Caco-2 (cell line): ENCODE measurements at regions of chr20 and their contacts with region 1.

Region 1: DNA sequence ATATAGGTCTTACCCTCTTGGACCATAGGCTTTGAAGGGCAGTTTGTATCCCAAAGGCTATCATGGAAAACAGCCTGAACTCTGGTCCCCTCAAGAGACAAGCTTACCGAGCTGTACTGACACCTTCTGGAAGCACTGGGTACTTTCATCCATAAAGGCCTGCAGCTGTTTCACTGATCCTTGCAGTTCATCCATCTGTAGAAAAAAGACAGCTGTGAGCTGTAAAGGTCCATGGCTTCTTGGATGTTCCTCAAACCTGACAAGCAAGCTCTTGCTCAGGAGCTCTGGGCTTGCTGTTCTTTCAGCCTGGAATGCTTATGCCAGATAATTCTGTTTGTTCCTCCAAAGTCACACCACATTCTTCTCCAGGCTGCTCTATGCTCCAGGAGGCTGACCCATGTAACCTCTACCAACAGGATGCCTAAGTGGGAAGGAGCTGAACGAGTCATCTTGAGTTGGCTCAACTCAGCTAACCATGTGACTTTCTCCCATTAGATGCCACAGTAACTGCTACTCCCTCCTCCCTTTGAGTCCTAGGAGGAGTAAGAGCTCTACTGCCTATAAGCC is 8.8 kb upstream of the NDRG3 start:
- DNase-seq: peak; percentile 86 to 89
- H3K4me3 ChIP-seq: no peak overlapping the region
- H3K4me3 Mint-ChIP-seq: no peak overlapping the region
- H3K27ac Mint-ChIP-seq: peak overlapping the region; percentile 10
- H3K4me1 ChIP-seq: peaks cover 5% of the 10 kb centered on the region
- H3K4me1 Mint-ChIP-seq: peaks cover 12% of the 10 kb centered on the region
- H3K27me3 ChIP-seq: no peaks in the 10 kb centered on the region
- H3K27me3 Mint-ChIP-seq: no peaks in the 10 kb centered on the region
- CTCF ChIP-seq: peak; percentile 96 to 97

Region 2: GRCh38 chr20:36550797-36551299 is 203.9 kb before region 1 on chr20:
- CTCF ChIA-PET with region 1: no interaction called
- POLR2A ChIA-PET with region 1: no interaction called
- intact Hi-C with region 1: loop called (anchors 1 kb)
- DNase-seq: no peak
- H3K4me3 ChIP-seq: no peak overlapping the region
- H3K4me3 Mint-ChIP-seq: no peak overlapping the region
- H3K27ac Mint-ChIP-seq: no peak overlapping the region
- H3K4me1 ChIP-seq: no peaks in the 10 kb centered on the region
- H3K4me1 Mint-ChIP-seq: no peaks in the 10 kb centered on the region
- H3K27me3 ChIP-seq: no peaks in the 10 kb centered on the region
- H3K27me3 Mint-ChIP-seq: peaks cover 2% of the 10 kb centered on the region
- CTCF ChIP-seq: no peak

Region 3: DNA sequence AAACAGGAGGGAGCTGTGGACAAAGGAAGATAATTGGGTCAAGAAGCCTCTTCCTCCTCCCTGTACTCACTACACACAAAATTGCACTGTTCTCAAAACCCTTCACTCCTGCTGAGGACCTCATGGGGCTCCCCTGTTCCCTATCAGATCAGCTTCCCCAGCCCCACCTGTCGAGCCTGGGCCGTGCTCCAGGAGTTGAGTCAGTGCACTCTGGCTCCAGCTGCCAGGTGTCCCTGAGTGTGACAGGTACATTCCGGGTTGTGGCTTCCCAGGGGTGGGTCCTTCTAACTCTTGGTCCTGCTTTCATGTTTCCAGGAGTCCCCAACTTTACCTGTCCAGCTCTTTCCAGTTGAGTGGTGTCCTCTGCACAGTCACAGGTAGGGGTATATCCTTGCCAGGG is 140.8 kb before region 1 on chr20:
- CTCF ChIA-PET with region 1: interaction called, 35 read pairs
- POLR2A ChIA-PET with region 1: interaction called, 4 read pairs
- intact Hi-C with region 1: loop called (anchors 1 kb)
- DNase-seq: no peak
- H3K4me3 ChIP-seq: no peak overlapping the region
- H3K4me3 Mint-ChIP-seq: no peak overlapping the region
- H3K27ac Mint-ChIP-seq: no peak overlapping the region
- H3K4me1 ChIP-seq: no peaks in the 10 kb centered on the region
- H3K4me1 Mint-ChIP-seq: no peaks in the 10 kb centered on the region
- H3K27me3 ChIP-seq: no peaks in the 10 kb centered on the region
- H3K27me3 Mint-ChIP-seq: no peaks in the 10 kb centered on the region
- CTCF ChIP-seq: no peak

Region 4: DNA sequence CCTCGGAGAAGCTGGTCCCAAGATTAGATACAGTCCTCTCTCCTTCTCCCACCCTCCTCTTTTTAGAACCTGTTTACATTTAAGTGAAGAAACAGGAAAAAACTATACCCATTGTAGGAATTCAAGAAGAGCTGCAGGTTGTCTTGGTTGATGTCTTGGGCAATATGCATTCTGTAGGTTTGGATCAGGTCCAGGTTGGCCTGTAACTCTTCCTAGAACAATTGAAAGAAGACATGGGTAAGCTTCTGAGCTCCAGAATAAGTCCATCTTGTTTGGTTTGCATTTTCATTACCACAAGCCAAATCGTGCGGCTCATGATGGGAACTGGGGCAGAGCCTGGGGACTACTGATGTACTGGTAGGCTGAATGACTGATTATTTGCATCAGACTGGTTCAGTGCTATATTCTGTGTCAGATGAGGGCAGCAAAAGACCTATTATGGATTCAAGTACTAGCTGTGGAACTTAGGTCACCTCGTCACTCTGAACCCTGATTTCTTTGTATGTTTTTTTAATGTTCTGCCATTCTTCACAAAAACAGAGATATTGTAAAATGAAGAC is 88.5 kb before region 1 on chr20:
- CTCF ChIA-PET with region 1: interaction called, 36 read pairs
- POLR2A ChIA-PET with region 1: no interaction called
- intact Hi-C with region 1: loop called (anchors 1 kb)
- DNase-seq: peak in 1 of 2 experiments; percentile 56
- H3K4me3 ChIP-seq: no peak overlapping the region
- H3K4me3 Mint-ChIP-seq: no peak overlapping the region
- H3K27ac Mint-ChIP-seq: no peak overlapping the region
- H3K4me1 ChIP-seq: peaks cover 7% of the 10 kb centered on the region
- H3K4me1 Mint-ChIP-seq: peaks cover 6% of the 10 kb centered on the region
- H3K27me3 ChIP-seq: no peaks in the 10 kb centered on the region
- H3K27me3 Mint-ChIP-seq: no peaks in the 10 kb centered on the region
- CTCF ChIP-seq: peak; percentile 24 to 52

Region 5: DNA sequence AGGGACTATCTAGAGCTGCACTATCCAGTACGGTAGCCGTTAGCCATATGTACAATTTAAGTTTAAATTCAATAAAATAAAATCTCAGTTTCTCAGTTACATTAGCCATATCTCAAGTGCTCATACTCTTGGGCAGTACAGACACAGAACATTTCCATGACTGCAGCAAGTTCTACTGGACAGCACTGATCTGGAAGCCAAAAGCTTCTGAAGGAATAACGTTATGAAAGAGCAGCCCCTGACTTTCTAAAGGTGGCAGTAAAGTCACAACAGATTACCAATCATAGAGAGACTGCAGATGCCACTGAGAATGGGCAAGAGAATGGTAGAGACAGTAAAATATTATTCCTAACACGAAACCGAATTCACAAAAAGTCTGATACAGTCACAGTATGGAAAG is 45.6 kb before region 1 on chr20:
- CTCF ChIA-PET with region 1: interaction called, 10 read pairs
- POLR2A ChIA-PET with region 1: no interaction called
- intact Hi-C with region 1: no loop called
- DNase-seq: no peak
- H3K4me3 ChIP-seq: no peak overlapping the region
- H3K4me3 Mint-ChIP-seq: no peak overlapping the region
- H3K27ac Mint-ChIP-seq: no peak overlapping the region
- H3K4me1 ChIP-seq: no peaks in the 10 kb centered on the region
- H3K4me1 Mint-ChIP-seq: no peaks in the 10 kb centered on the region
- H3K27me3 ChIP-seq: no peaks in the 10 kb centered on the region
- H3K27me3 Mint-ChIP-seq: no peaks in the 10 kb centered on the region
- CTCF ChIP-seq: no peak

Region 6: GRCh38 chr20:36717657-36718056 is 37.1 kb before region 1 on chr20:
- CTCF ChIA-PET with region 1: interaction called, 3 read pairs
- POLR2A ChIA-PET with region 1: no interaction called
- intact Hi-C with region 1: loop called (anchors 1 kb)
- DNase-seq: peak in 1 of 2 experiments; percentile 36
- H3K4me3 ChIP-seq: no peak overlapping the region
- H3K4me3 Mint-ChIP-seq: no peak overlapping the region
- H3K27ac Mint-ChIP-seq: no peak overlapping the region
- H3K4me1 ChIP-seq: no peaks in the 10 kb centered on the region
- H3K4me1 Mint-ChIP-seq: no peaks in the 10 kb centered on the region
- H3K27me3 ChIP-seq: no peaks in the 10 kb centered on the region
- H3K27me3 Mint-ChIP-seq: no peaks in the 10 kb centered on the region
- CTCF ChIP-seq: peak; percentile 22 to 40

Region 7: DNA sequence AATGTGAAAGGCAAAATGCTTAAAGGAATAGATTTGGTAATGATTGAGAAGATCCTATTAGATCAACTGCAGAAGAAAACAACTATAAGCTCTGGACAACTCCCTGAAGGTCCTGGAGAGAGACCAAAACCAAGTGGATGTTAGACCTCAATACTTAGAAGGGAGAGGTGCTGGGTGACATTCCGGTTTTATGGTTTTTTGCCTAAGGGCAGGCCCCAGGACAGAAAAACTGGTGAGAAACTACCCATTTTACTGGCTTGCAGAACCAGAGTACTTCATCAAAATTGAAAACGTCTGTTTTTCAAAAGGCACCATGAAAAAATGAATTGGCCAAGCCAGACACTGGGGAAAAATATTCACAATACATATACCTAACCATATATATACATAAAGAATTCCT is 170.5 kb after region 1 on chr20:
- CTCF ChIA-PET with region 1: no interaction called
- POLR2A ChIA-PET with region 1: no interaction called
- intact Hi-C with region 1: no loop called
- DNase-seq: no peak
- H3K4me3 ChIP-seq: no peak overlapping the region
- H3K4me3 Mint-ChIP-seq: no peak overlapping the region
- H3K27ac Mint-ChIP-seq: no peak overlapping the region
- H3K4me1 ChIP-seq: peaks cover 10% of the 10 kb centered on the region
- H3K4me1 Mint-ChIP-seq: peaks cover 20% of the 10 kb centered on the region
- H3K27me3 ChIP-seq: no peaks in the 10 kb centered on the region
- H3K27me3 Mint-ChIP-seq: no peaks in the 10 kb centered on the region
- CTCF ChIP-seq: no peak